ENCODE measurements at regions of chr4 and their contacts with region 1.

Region 1: DNA sequence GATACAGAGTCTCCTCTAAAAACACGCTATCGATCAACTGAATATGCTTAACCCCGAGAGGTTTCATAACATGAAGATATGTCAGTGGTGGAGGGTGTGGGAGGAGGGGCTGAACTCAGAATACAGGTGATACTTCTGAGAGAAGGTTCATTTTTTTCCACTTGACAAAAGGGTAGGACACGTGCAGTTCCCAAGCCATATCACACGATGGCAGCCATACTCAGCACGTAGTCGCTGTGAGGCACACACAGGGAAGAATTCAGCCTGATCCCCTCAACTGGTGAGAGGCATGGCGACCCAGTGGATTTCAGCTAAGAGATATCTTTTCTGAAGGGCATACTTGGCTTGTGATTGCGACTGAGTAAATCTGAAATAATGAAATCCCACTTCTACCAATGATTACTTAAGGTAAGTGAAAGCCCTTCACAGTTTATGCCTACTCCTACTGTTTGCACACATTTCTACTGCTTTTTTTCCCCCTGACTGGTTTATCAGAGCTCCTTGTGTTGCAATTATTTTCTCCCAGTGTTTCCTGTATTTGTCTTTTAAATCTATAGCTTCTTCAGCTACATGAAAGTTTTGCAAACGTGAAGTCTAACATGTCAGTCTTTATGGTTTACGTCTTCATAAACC is 133.1 kb downstream of the CORIN start:
- DNase-seq: no peak
- H3K4me3 ChIP-seq: no peak overlapping the region
- CTCF ChIP-seq: peak; percentile 73

Region 2: GRCh38 chr4:47468691-47469365 is 236.0 kb before region 1 on chr4:
- CTCF ChIA-PET with region 1: no interaction called
- POLR2A ChIA-PET with region 1: no interaction called
- DNase-seq: no peak
- H3K4me3 ChIP-seq: no peak overlapping the region
- CTCF ChIP-seq: no peak

Region 3: DNA sequence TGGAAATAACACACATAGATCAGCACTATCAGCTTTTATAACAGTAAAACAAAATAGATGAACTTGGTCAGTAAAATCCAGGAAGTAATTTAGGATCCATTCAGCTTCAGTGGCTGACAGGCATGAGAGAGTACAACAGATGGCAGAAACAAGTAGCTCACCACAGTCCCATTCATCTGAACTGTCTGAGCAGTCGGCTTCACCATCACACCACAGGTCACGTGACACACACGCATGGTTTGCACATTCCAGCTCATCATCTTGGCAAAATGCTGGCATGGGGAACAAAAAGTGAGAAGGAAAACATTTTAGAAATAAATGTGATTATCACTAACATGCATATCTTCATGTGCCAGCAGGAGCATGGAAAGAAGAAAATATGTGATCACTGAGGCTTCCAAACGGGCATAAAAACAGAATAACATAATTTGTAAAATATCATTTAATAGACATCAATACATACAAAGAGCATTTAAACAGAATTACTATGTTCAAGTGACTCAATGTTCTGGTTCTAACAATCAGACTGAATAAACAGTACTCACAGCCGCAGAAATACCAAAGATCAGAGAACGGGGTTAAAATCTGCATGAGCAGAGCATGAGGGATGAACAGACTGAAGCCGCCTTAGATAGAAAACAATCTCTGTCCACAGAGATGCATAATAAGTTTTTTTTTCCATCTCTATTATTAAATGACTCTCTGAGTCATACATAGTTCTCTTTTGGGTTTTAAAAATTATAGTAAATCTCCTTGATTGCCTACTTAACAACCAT is 61.6 kb before region 1 on chr4:
- CTCF ChIA-PET with region 1: no interaction called
- POLR2A ChIA-PET with region 1: no interaction called
- DNase-seq: no peak
- H3K4me3 ChIP-seq: no peak overlapping the region
- CTCF ChIP-seq: no peak

Region 4: GRCh38 chr4:47686294-47686872 is 18.4 kb before region 1 on chr4:
- CTCF ChIA-PET with region 1: interaction called, 13 read pairs
- POLR2A ChIA-PET with region 1: no interaction called
- DNase-seq: no peak
- H3K4me3 ChIP-seq: no peak overlapping the region
- CTCF ChIP-seq: peak; percentile 64

Region 5: GRCh38 chr4:47715716-47716416 is 11.1 kb after region 1 on chr4:
- CTCF ChIA-PET with region 1: interaction called, 37 read pairs
- POLR2A ChIA-PET with region 1: no interaction called
- DNase-seq: no peak
- H3K4me3 ChIP-seq: no peak overlapping the region
- CTCF ChIP-seq: no peak

Region 6: GRCh38 chr4:47824840-47825239 is 120.0 kb after region 1 on chr4:
- CTCF ChIA-PET with region 1: interaction called, 14 read pairs
- POLR2A ChIA-PET with region 1: no interaction called
- DNase-seq: no peak
- H3K4me3 ChIP-seq: no peak overlapping the region
- CTCF ChIP-seq: no peak

Region 7: GRCh38 chr4:47836641-47837093 is 131.9 kb after region 1 on chr4:
- CTCF ChIA-PET with region 1: interaction called, 433 read pairs
- POLR2A ChIA-PET with region 1: no interaction called
- DNase-seq: no peak
- H3K4me3 ChIP-seq: peak overlapping the region; percentile 71
- CTCF ChIP-seq: peak; percentile 91

Region 8: DNA sequence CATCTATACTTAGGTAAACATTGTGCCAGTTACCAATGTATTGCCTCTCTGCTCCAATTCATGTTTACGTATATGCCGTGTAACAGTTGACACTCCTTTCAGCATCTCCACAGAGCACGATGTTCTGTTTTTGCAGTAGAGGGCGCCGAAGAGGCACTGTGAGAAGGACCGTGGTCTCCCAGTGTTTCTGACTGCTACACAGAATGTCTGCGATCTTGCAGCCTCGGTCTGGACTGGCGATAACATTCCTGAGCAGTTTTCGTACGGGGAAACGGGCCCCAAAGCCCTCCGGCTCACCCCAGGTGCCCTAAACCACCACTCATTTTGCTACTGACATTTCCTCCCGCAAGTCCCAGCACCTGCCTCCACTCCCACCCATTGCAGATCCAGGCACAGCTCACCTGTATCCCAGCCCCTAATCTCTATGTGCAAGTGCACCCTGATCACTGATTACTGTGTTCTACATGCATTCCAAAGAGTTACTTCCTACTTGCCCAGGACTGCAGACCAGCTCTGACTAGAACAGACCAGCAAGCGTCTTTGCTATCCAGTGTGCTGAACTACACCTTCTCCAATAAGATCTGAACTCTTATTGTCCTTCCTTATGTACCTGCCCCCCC is 221.9 kb after region 1 on chr4:
- CTCF ChIA-PET with region 1: interaction called, 71 read pairs
- POLR2A ChIA-PET with region 1: no interaction called
- DNase-seq: no peak
- H3K4me3 ChIP-seq: peak overlapping the region; percentile 6; the same call in 1 of the 2 replicates
- CTCF ChIP-seq: peak; percentile 83

Measured in AG04449 (cell line).